Colonic mucosa (tissue), 4 donors: ENCODE measurements at regions of chr3 and their contacts with region 1.

Region 1: DNA sequence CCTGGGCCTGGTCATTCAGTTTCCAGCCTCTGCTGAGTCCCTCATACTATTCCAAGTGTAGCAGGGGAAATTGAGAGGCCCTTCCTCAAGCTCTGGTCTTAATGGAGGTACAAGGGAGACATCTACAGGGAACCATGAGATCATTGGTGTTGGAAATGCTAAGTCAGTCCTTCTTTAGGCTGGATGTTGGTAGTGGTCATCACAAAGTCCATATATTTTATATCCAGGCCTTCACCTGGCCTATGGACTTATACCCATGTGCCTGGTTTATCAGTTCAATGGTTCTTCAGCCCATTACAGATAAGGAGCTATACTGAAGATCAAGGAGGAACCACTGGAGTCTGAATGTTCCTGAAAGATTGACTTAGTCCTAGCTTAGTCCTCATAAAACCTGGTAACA is 135.0 kb downstream of the STAG1 start:
- DNase-seq: no peak
- H3K4me3 ChIP-seq: no peak overlapping the region
- H3K27ac ChIP-seq: peak overlapping the region; percentile 71
- H3K4me1 ChIP-seq: no peaks in the 10 kb centered on the region
- H3K27me3 ChIP-seq: no peaks in the 10 kb centered on the region
- CTCF ChIP-seq: no peak

Region 2: GRCh38 chr3:136734382-136735070 is 117.3 kb after region 1 on chr3:
- intact Hi-C with region 1: loop called (anchors 10 kb)
- DNase-seq: no peak
- H3K4me3 ChIP-seq: no peak overlapping the region
- H3K27ac ChIP-seq: no peak overlapping the region
- H3K4me1 ChIP-seq: peaks cover 7% of the 10 kb centered on the region
- H3K27me3 ChIP-seq: no peaks in the 10 kb centered on the region
- CTCF ChIP-seq: no peak